GM10248 (cell line): ENCODE measurements at regions of chr4 and their contacts with region 1.

Region 1: DNA sequence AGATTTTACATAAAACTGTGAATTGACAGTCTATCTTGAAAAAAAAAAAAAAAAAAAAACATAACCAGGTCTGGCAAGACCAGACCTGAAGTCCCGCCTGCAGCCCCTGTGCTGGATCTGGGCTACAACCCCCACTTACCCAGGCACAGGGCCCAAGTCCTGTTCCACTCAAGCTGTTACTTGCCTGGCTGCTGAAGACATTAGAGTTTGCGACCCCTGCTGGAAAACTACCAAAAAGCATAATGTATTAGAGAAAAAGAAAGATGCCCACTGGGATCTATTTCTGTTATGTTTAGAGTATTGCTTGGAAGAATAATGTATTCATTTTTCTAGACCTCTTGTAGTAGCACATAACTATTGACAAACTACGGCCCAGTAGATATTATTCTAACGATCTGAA is 4.7 kb downstream of the HS3ST1 start:
- DNase-seq: peak; percentile 58
- CTCF ChIP-seq: peak; percentile 64

Region 2: DNA sequence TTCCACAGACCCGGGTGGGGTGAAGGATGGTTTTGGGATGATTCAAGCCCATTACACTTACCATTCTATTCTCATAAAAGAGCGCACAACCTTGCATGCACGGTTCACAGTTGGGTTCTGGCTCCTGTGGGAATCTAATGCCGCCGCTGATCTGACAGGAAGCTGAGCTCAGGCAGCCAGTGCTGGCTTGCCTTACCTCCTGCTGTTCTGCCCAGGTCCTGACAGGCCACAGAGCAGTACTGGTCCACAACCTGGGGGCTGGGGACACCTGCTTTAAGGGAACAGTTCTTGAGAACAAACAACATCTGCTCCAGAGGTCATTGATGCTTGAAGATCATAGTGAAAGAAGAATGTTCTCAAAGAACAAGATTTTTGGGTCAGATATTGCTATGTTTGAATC is 12.7 kb after region 1 on chr4:
- CTCF ChIA-PET with region 1: interaction called, 28 read pairs
- POLR2A ChIA-PET with region 1: interaction called, 3 read pairs
- DNase-seq: no peak
- CTCF ChIP-seq: no peak